Dorsolateral prefrontal cortex (tissue), 120 donors: ENCODE measurements at regions of chr19 and their contacts with region 1.

Region 1: GRCh38 chr19:12055783-12056182 is 3.0 kb upstream of the ZNF878 start:
- DNase-seq: no peak
- H3K4me3 ChIP-seq: no peak overlapping the region
- H3K27ac ChIP-seq: no peak overlapping the region
- H3K27me3 ChIP-seq: peaks cover 0 to 7% (median 0%) of the 10 kb centered on the region in 45 donors
- CTCF ChIP-seq: no peak

Region 2: GRCh38 chr19:11924886-11925650 is 130.7 kb before region 1 on chr19 and contains the start of gene ZNF700:
- intact Hi-C with region 1: loop called in 1 of 2 experiments (anchors 5 kb)
- DNase-seq: peak; percentile 90 to 97 (median 96)
- H3K4me3 ChIP-seq: peak within 1 kb of the TSS; percentile 59 to 100 (median 94)
- H3K27ac ChIP-seq: peak within 1 kb of the TSS; percentile 65 to 97 (median 88)
- H3K27me3 ChIP-seq: no peaks in the 10 kb centered on the region
- CTCF ChIP-seq: peak in 17 of 56 donors; percentile 7 to 55 (median 24)
- total RNA-seq, gene ZNF700: 8.4 to 16.2 (median 11.6) TPM